B cell (primary cell): ENCODE measurements at regions of chr3 and their contacts with region 1.

Region 1: GRCh38 chr3:121545574-121546455 is at the start of gene POLQ:
- DNase-seq: peak; percentile 91
- ATAC-seq: peak; percentile 91
- H3K4me3 ChIP-seq: peak within 1 kb of the TSS; percentile 66 to 98 (median 79)
- H3K4me3 Mint-ChIP-seq: peak within 1 kb of the TSS; percentile 88
- H3K27ac ChIP-seq: peak within 1 kb of the TSS; percentile 55 to 83
- H3K27ac Mint-ChIP-seq: peak within 1 kb of the TSS; percentile 93
- H3K4me1 ChIP-seq: peaks cover 20 to 27% of the 10 kb centered on the region in 2 donors
- H3K4me1 Mint-ChIP-seq: peaks cover 27% of the 10 kb centered on the region
- H3K27me3 ChIP-seq: no peaks in the 10 kb centered on the region
- H3K27me3 Mint-ChIP-seq: no peaks in the 10 kb centered on the region
- CTCF ChIP-seq: no peak
- total RNA-seq, gene POLQ: 0.79 and 0.97 TPM in 2 replicates

Region 2: GRCh38 chr3:120095226-120095978 is 1450.4 kb before region 1 on chr3:
- CTCF ChIA-PET with region 1: no interaction called
- POLR2A ChIA-PET with region 1: interaction called, 5 read pairs
- intact Hi-C with region 1: loop called (anchors 10 kb)
- DNase-seq: peak; percentile 90
- ATAC-seq: peak; percentile 15
- H3K4me3 ChIP-seq: peak overlapping the region; percentile 82 to 96 (median 87)
- H3K4me3 Mint-ChIP-seq: no peak overlapping the region
- H3K27ac ChIP-seq: peak overlapping the region; percentile 100
- H3K27ac Mint-ChIP-seq: no peak overlapping the region
- H3K4me1 ChIP-seq: peaks cover 25 to 30% of the 10 kb centered on the region in 2 donors
- H3K4me1 Mint-ChIP-seq: peaks cover 8% of the 10 kb centered on the region
- H3K27me3 ChIP-seq: no peaks in the 10 kb centered on the region
- H3K27me3 Mint-ChIP-seq: no peaks in the 10 kb centered on the region
- CTCF ChIP-seq: no peak

Region 3: GRCh38 chr3:121749276-121750086 is 203.7 kb after region 1 on chr3 and contains the start of gene GOLGB1:
- CTCF ChIA-PET with region 1: interaction called, 3 read pairs
- POLR2A ChIA-PET with region 1: no interaction called
- intact Hi-C with region 1: loop called (anchors 1 kb)
- DNase-seq: peak; percentile 97
- ATAC-seq: peak; percentile 93
- H3K4me3 ChIP-seq: peak within 1 kb of the TSS; percentile 75 to 100 (median 96)
- H3K4me3 Mint-ChIP-seq: no peak within 1 kb of the TSS
- H3K27ac ChIP-seq: peak within 1 kb of the TSS; percentile 90 to 98
- H3K27ac Mint-ChIP-seq: no peak within 1 kb of the TSS
- H3K4me1 ChIP-seq: peaks cover 18 to 19% of the 10 kb centered on the region in 2 donors
- H3K4me1 Mint-ChIP-seq: peaks cover 11% of the 10 kb centered on the region
- H3K27me3 ChIP-seq: no peaks in the 10 kb centered on the region
- H3K27me3 Mint-ChIP-seq: no peaks in the 10 kb centered on the region
- CTCF ChIP-seq: no peak
- total RNA-seq, gene GOLGB1: 58.7 and 64.3 TPM in 2 replicates

Region 4: GRCh38 chr3:122258757-122259371 is 713.0 kb after region 1 on chr3:
- CTCF ChIA-PET with region 1: interaction called, 33 read pairs
- POLR2A ChIA-PET with region 1: no interaction called
- intact Hi-C with region 1: loop called (anchors 1 kb)
- DNase-seq: peak; percentile 77
- ATAC-seq: peak; percentile 92
- H3K4me3 ChIP-seq: no peak overlapping the region
- H3K4me3 Mint-ChIP-seq: no peak overlapping the region
- H3K27ac ChIP-seq: no peak overlapping the region
- H3K27ac Mint-ChIP-seq: no peak overlapping the region
- H3K4me1 ChIP-seq: peaks cover 0 to 3% of the 10 kb centered on the region in 2 donors
- H3K4me1 Mint-ChIP-seq: peaks cover 10% of the 10 kb centered on the region
- H3K27me3 ChIP-seq: no peaks in the 10 kb centered on the region
- H3K27me3 Mint-ChIP-seq: no peaks in the 10 kb centered on the region
- CTCF ChIP-seq: peak; percentile 76

Region 5: DNA sequence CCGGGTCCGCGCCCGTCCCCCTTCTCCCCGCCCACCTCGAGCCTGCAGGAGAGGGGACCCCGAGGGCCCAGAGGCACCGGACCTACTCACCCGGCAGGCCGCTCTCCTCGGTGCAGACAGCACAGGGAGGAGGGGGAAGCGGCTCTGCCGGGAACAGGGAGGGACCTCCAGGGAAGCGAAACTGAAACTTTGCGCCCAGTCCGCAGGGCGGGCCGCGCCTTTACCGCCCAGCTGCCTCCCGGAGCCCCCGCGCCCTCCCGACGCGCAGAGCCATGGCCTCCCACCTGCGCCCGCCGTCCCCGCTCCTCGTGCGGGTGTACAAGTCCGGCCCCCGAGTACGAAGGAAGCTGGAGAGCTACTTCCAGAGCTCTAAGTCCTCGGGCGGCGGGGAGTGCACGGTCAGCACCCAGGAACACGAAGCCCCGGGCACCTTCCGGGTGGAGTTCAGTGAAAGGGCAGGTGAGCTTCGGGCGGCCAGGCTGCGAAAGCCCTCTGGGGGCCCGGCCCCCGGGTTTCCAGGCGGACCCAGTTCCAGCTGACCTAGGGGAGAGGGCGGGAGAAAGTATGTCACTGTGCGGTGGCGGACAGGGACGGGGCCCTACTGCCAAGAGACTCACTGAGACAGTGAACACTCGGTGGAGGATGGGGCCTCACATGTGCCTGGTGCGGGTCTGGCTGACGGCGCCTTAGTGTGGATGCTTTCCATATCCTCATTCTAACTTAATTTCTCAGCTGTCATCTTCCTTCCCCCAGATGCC is 1018.5 kb after region 1 on chr3 and contains the starts of genes DTX3L and PARP9:
- CTCF ChIA-PET with region 1: interaction called, 5 read pairs
- POLR2A ChIA-PET with region 1: no interaction called
- intact Hi-C with region 1: loop called (anchors 5 kb)
- DNase-seq: peak; percentile 84
- ATAC-seq: peak; percentile 84
- H3K4me3 ChIP-seq: peak within 1 kb of the TSS; percentile 63 to 95 (median 89)
- H3K4me3 Mint-ChIP-seq: peak within 1 kb of the TSS; percentile 92
- H3K27ac ChIP-seq: peak within 1 kb of the TSS; percentile 91 to 92
- H3K27ac Mint-ChIP-seq: peak within 1 kb of the TSS; percentile 95
- H3K4me1 ChIP-seq: peaks cover 59 to 69% of the 10 kb centered on the region in 2 donors
- H3K4me1 Mint-ChIP-seq: peaks cover 77% of the 10 kb centered on the region
- H3K27me3 ChIP-seq: no peaks in the 10 kb centered on the region
- H3K27me3 Mint-ChIP-seq: no peaks in the 10 kb centered on the region
- CTCF ChIP-seq: no peak
- total RNA-seq, gene DTX3L: 41.1 and 44.0 TPM in 2 replicates
- total RNA-seq, gene PARP9: 29.8 and 31.2 TPM in 2 replicates

Region 6: DNA sequence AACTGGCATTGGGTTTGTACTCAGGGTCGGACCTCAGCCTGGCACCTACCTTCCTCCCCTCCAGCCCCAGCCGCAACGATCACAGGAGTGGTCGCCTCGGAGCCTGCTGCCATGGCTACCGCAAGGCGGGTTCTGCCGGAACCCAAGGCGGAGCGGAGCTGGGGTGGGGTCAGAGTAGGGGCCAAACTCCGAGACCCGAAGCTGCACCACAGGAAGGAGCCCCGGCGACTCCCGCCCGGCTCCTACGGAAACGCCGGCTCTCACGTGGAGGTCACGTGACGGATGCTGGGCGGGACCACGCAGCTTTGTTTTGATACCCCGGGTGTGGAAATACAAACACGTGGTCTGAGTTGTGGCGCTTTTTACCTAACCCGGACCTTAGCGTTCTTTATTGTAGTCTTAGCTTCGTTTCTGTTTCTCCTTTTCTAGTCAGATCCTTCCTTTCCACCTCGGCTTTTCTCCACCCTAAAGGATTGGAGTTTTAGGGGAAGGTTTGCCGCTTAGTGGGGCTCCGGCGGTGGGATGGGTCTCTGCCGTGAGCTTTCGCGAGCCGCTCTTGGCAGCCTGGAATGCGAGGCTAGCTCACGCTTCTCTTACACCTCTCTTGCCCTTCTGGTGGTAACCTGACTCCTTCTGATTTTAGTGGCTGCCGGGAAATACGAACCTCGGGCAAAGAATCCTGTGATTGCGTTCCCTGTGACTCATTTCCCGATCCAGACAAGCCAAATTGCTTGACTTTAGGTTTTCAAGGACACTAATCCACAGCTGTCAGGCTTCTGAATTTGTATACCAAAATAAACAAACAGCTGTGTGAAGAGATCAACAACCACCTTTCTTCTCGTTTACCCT is 1248.0 kb after region 1 on chr3 and contains the start of gene HSPBAP1:
- CTCF ChIA-PET with region 1: no interaction called
- POLR2A ChIA-PET with region 1: no interaction called
- intact Hi-C with region 1: loop called (anchors 1 kb)
- DNase-seq: peak; percentile 96
- ATAC-seq: peak; percentile 57
- H3K4me3 ChIP-seq: peak within 1 kb of the TSS; percentile 58 to 96 (median 83)
- H3K4me3 Mint-ChIP-seq: peak within 1 kb of the TSS; percentile 86
- H3K27ac ChIP-seq: peak within 1 kb of the TSS; percentile 98 to 99
- H3K27ac Mint-ChIP-seq: no peak within 1 kb of the TSS
- H3K4me1 ChIP-seq: peaks cover 23 to 26% of the 10 kb centered on the region in 2 donors
- H3K4me1 Mint-ChIP-seq: peaks cover 27% of the 10 kb centered on the region
- H3K27me3 ChIP-seq: no peaks in the 10 kb centered on the region
- H3K27me3 Mint-ChIP-seq: no peaks in the 10 kb centered on the region
- CTCF ChIP-seq: no peak
- total RNA-seq, gene HSPBAP1: 49.2 and 49.6 TPM in 2 replicates

Region 7: GRCh38 chr3:123489400-123490004 is 1943.7 kb after region 1 on chr3:
- CTCF ChIA-PET with region 1: interaction called, 10 read pairs
- POLR2A ChIA-PET with region 1: interaction called, 3 read pairs
- intact Hi-C with region 1: no loop called
- DNase-seq: peak; percentile 38
- ATAC-seq: peak; percentile 36
- H3K4me3 ChIP-seq: no peak overlapping the region
- H3K4me3 Mint-ChIP-seq: no peak overlapping the region
- H3K27ac ChIP-seq: no peak overlapping the region
- H3K27ac Mint-ChIP-seq: no peak overlapping the region
- H3K4me1 ChIP-seq: no peaks in the 10 kb centered on the region
- H3K4me1 Mint-ChIP-seq: no peaks in the 10 kb centered on the region
- H3K27me3 ChIP-seq: no peaks in the 10 kb centered on the region
- H3K27me3 Mint-ChIP-seq: peaks cover 1% of the 10 kb centered on the region
- CTCF ChIP-seq: peak; percentile 76